H1 (cell line): ENCODE measurements at regions of chr1 and their contacts with region 1.

Region 1: DNA sequence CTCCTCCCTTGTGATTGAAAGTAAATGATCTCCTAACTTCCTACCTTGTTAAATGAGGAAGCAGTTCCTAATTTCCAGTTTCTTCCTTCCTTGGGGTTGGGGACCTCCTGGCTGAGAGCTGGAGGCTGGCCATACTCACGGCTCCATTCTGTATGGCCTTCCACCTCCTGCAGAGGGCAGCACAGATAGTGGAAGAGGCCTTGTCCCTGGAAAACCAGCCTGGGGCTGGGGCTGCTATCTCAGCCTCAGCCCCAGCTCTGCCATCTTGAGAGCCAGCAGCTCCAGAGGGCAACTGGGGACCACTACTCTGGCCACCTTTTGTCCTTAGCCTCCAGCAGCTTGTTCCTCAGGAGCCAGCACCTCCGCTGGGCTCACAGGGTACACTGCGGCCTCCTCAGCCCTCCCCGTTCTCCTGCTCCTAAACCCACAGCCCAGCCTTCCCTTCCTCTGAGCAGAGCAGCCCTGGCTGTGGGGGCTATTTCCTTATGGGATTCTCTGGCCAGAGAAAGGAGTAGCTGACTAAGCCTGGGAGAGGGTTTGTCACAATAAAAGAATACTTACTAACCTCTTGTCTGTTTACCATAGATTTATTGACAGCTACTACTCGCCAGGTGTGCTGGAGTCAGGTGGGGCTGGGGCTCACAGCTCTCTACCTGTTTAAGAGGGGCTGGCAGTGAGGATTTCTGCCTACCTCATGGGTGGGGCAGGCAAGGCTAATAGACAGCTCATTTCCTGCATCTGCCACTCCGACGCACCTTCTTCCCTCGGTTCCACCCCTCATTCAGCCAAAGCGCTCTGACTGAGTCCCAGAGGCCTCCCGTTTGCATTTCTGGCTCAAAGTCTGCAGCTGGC is 6.3 kb downstream of the TMEM234 start:
- DNase-seq: peak in 1 of 2 experiments; percentile 79
- H3K4me3 ChIP-seq: no peak overlapping the region
- H3K27ac ChIP-seq: no peak overlapping the region
- H3K4me1 ChIP-seq: no peaks in the 10 kb centered on the region
- H3K27me3 ChIP-seq: no peaks in the 10 kb centered on the region
- CTCF ChIP-seq: peak; percentile 86 to 91 (median 86)
- EP300 ChIP-seq: no peak
- POLR2A ChIP-seq: no peak
- RAD21 ChIP-seq: peak; percentile 76 to 87

Region 2: DNA sequence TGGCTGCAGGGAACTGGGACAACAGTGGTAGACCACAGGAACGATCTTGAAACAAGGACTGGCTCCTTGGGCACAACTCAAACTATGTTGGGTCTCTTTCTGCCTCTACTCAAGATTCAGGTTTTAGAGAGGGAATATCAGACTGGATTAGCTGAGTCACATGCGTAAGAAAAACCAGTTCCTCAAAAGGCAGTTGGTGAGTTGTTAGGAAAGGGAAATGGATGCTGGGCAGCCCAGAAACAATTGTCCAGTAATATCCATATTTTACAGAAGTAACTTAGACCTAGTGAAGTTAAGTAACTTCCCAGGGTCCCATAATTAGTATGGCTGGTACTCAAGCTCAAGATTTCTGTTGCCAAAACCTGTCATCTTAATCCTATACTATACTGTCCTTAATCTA is 170.1 kb before region 1 on chr1:
- CTCF ChIA-PET with region 1: no interaction called
- POLR2A ChIA-PET with region 1: no interaction called
- DNase-seq: no peak
- H3K4me3 ChIP-seq: no peak overlapping the region
- H3K27ac ChIP-seq: no peak overlapping the region
- H3K4me1 ChIP-seq: no peaks in the 10 kb centered on the region
- H3K27me3 ChIP-seq: no peaks in the 10 kb centered on the region
- CTCF ChIP-seq: no peak
- EP300 ChIP-seq: no peak
- POLR2A ChIP-seq: no peak
- RAD21 ChIP-seq: no peak

Region 3: DNA sequence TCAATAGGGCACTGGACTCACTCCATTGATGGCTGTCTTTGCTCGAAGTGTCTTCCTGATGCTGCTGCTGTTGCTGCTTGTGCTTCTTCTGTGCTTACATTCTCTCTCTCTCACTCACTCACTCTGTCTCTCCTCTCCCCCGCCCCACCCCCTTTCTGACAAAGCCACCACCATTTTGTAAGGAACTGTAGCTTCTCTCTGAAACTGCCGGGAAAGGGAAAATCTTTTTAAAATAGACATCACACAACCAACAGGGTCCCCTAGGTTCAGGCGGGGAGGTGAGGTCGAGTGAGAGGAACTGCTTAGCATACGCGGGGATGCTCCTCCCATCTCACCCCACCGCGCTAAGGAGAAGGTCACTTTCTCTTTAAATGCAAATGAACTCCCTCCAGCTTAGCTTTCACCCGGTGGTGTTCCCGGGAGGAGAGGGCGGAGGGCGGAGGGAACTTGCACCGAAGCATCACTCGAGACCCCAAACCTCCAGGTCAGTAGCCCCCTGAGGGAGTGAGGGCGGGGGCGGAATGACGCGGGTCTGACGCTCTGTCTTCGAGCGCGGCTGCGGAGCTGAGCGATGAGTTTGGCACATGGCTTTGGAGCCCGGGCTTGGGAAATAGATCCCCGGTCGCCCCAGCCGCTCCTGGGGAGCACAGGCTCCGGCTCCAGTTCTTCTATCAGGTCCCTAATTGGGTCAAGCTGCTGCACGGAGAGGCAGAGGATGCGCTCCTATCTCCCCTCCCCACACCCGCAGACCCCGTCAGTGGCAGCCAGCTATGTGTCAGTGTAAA is 15.4 kb before region 1 on chr1 and contains the start of gene CCDC28B:
- CTCF ChIA-PET with region 1: interaction called, 25 read pairs
- POLR2A ChIA-PET with region 1: interaction called, 91 read pairs
- DNase-seq: peak in 1 of 2 experiments; percentile 82
- H3K4me3 ChIP-seq: peak within 1 kb of the TSS; percentile 47 to 67 (median 62)
- H3K27ac ChIP-seq: peak within 1 kb of the TSS; percentile 5; the same call in 1 of the 2 replicates
- H3K4me1 ChIP-seq: peaks cover 13 to 31% (median 20%) of the 10 kb centered on the region in 4 experiments
- H3K27me3 ChIP-seq: peaks cover 0 to 4% (median 2%) of the 10 kb centered on the region in 4 experiments; a peak in 3 of 7 replicates
- CTCF ChIP-seq: no peak
- EP300 ChIP-seq: no peak
- POLR2A ChIP-seq: no peak
- RAD21 ChIP-seq: no peak
- total RNA-seq, gene CCDC28B: 17.1 and 20.9 TPM in 2 replicates

Region 4: DNA sequence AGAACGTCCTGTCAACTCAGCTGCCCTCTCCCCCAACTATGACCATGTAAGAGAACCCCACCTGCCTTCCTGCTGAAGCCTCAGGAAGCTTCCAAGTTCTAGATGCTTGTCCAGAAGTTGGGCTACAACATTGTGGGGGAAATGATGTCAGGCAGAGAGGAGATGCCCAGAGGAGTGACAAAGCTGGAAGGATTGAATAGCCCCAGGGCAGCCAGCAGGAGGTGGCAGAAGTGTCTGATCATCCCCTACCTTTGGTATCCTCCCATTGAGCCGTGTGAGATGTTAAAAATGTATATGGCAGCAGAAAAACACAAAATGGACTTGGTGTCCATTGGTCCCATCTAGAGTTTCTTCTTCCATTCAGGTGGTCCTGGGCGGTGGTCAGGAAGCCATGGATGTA is 12.9 kb after region 1 on chr1:
- CTCF ChIA-PET with region 1: interaction called, 38 read pairs
- POLR2A ChIA-PET with region 1: interaction called, 13 read pairs
- DNase-seq: no peak
- H3K4me3 ChIP-seq: no peak overlapping the region
- H3K27ac ChIP-seq: no peak overlapping the region
- H3K4me1 ChIP-seq: no peaks in the 10 kb centered on the region
- H3K27me3 ChIP-seq: no peaks in the 10 kb centered on the region
- CTCF ChIP-seq: no peak
- EP300 ChIP-seq: no peak
- POLR2A ChIP-seq: no peak
- RAD21 ChIP-seq: no peak

Region 5: DNA sequence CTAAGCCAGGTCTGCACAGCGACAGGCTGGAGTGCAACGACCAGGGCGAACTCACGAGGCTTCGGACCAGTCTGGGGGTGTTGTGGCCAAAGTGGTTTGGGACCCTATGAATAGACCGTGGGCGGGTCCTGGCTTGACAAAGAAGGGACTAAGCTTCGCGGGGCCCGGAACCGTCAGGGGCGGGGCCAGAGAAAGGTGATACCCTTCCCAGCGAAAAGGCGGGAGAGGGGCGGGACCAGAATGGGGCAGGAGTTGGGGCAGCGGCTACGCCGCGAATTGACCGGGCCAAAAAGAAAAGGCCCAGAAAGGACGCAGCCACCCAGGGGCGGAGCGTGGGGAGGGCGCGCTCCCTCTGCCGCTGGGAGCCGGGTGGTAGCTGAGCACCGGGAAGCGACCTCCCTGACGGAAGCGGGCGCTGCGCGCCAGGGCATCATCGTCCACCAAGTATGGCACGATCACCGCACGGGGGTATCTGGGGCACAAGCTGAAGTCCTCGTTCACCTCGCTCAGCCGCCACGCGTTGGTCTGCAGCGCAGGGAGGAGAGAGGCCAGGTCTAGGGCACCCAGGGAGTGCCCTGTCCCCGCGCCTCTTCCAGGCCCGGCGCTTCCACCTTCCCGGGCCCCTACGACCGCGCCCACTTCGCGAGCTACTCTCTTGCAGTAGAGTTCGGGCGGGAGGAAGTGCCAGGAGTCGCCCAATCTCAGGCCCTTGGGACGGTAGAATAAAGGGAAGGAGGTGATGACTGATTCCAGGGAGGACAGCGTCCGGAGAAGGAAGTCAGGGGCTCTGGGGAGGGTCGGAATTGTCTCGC is 24.5 kb after region 1 on chr1:
- CTCF ChIA-PET with region 1: interaction called, 70 read pairs
- POLR2A ChIA-PET with region 1: interaction called, 52 read pairs
- DNase-seq: peak; percentile 85 to 96
- H3K4me3 ChIP-seq: peak overlapping the region; percentile 65 to 91 (median 68)
- H3K27ac ChIP-seq: peak overlapping the region; percentile 55
- H3K4me1 ChIP-seq: peaks cover 0 to 7% (median 3%) of the 10 kb centered on the region in 4 experiments; a peak in 3 of 7 replicates
- H3K27me3 ChIP-seq: no peaks in the 10 kb centered on the region; a peak in 1 of 7 replicates
- CTCF ChIP-seq: peak in 2 of 3 experiments; percentile 16 to 27; a peak in 3 of 4 replicates
- EP300 ChIP-seq: no peak
- POLR2A ChIP-seq: peak in 1 of 2 experiments; percentile 73; a peak in 2 of 3 replicates
- RAD21 ChIP-seq: peak in 1 of 2 experiments; percentile 13; a peak in 1 of 4 replicates

Region 6: GRCh38 chr1:32291708-32292492 is 76.0 kb after region 1 on chr1 and contains the start of gene HDAC1:
- CTCF ChIA-PET with region 1: interaction called, 15 read pairs
- POLR2A ChIA-PET with region 1: interaction called, 3 read pairs
- DNase-seq: peak; percentile 84 to 93
- H3K4me3 ChIP-seq: peak within 1 kb of the TSS; percentile 77 to 98 (median 96)
- H3K27ac ChIP-seq: no peak within 1 kb of the TSS
- H3K4me1 ChIP-seq: peaks cover 0 to 5% (median 4%) of the 10 kb centered on the region in 4 experiments
- H3K27me3 ChIP-seq: no peaks in the 10 kb centered on the region
- CTCF ChIP-seq: no peak
- EP300 ChIP-seq: peak; percentile 30 to 92
- POLR2A ChIP-seq: peak in 1 of 2 experiments; percentile 39; a peak in 1 of 3 replicates
- RAD21 ChIP-seq: no peak
- total RNA-seq, gene HDAC1: 111 and 112 TPM in 2 replicates

Region 7: GRCh38 chr1:32321712-32322291 is 105.9 kb after region 1 on chr1:
- CTCF ChIA-PET with region 1: interaction called, 57 read pairs
- POLR2A ChIA-PET with region 1: interaction called, 4 read pairs
- DNase-seq: no peak
- H3K4me3 ChIP-seq: no peak overlapping the region
- H3K27ac ChIP-seq: no peak overlapping the region
- H3K4me1 ChIP-seq: no peaks in the 10 kb centered on the region
- H3K27me3 ChIP-seq: no peaks in the 10 kb centered on the region
- CTCF ChIP-seq: no peak
- EP300 ChIP-seq: no peak
- POLR2A ChIP-seq: no peak
- RAD21 ChIP-seq: no peak